ENCODE measurements at regions of chrX and their contacts with region 1.

Region 1: DNA sequence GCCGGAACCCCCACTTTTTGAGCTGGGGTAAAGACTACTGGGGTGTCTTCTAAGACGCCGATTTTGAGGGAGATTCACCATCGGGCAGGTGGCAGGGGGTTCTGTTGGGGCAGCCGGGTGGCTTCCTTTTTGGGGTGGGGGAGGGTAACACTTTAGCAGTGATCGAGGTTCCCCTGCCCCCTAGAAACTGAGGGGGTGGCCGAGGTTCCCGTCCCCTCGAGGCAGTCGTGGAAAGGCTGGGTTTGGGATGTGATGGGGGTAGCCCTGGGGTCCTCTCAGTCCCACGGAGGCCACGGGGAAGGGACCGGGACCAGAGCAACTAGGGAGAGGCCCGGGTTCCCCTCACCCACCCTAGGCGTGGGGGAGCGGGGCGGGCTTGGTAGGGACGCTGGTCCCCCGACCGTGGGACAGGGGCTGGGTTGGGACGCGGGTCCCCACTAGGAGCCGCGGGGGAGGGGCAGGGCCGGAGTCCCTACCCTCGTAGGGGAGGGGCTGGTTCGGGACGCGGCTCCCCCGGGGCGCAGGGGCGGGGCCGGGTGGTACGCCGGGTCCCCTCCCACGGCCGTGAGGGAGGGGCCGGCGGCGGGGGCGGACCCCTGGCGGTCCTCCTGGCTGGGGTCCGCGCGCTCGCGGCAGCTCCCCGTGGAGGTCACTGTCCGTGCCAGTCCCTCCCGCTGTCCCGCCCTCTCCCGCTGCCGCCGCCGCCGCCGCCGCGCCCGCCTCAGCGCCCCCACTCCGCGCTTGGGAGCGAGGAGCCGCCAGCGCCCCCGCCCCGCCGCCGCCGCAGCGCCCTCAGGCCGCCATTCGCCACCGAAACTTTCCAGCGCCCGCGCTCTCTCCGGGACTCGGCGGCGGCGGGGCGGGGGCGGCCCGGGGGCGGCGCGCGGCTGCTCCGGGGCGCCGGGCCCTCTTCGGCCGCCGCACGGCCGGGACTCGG is at the start of gene TBL1X:
- DNase-seq: peak; percentile 45 to 52 (median 49)
- H3K4me3 ChIP-seq: peak within 1 kb of the TSS in 1 of 2 donors; percentile 32
- H3K4me3 Mint-ChIP-seq: peak within 1 kb of the TSS; percentile 75 to 87 (median 82)
- H3K27ac ChIP-seq: peak within 1 kb of the TSS; percentile 56
- H3K27ac Mint-ChIP-seq: peak within 1 kb of the TSS; percentile 88 to 100 (median 93)
- H3K4me1 ChIP-seq: peaks cover 38% of the 10 kb centered on the region
- H3K4me1 Mint-ChIP-seq: peaks cover 21 to 54% (median 35%) of the 10 kb centered on the region in 4 donors
- H3K27me3 ChIP-seq: no peaks in the 10 kb centered on the region
- H3K27me3 Mint-ChIP-seq: peaks cover 0 to 4% of the 10 kb centered on the region in 2 donors
- total RNA-seq, gene TBL1X: 48.1 to 50.5 TPM

Region 2: GRCh38 chrX:8939344-8939743 is 525.4 kb before region 1 on chrX:
- CTCF ChIA-PET with region 1: no interaction called
- POLR2A ChIA-PET with region 1: no interaction called
- intact Hi-C with region 1: no loop called
- DNase-seq: no peak
- H3K4me3 ChIP-seq: no peak overlapping the region
- H3K4me3 Mint-ChIP-seq: no peak overlapping the region
- H3K27ac ChIP-seq: no peak overlapping the region
- H3K27ac Mint-ChIP-seq: no peak overlapping the region
- H3K4me1 ChIP-seq: no peaks in the 10 kb centered on the region
- H3K4me1 Mint-ChIP-seq: no peaks in the 10 kb centered on the region
- H3K27me3 ChIP-seq: no peaks in the 10 kb centered on the region
- H3K27me3 Mint-ChIP-seq: peaks cover 2 to 7% of the 10 kb centered on the region in 2 donors

Region 3: DNA sequence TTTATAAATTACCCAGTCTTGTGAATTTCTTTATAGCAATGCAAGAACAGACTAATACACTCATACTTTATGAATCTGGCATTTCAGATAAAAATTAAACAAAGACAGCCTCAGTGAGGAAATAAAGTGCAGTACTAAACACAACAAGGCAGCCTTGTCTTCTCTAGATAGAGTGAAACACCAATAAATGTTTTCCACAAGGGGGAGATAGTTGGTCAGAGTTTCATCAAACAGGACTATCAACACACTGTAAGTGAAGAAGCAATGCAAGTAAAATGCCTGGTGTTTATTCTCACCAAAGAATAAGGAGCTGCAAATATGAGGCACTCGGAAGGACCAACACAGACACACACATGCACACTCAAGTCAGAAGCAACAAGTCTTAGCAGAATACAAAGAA is 493.6 kb before region 1 on chrX:
- CTCF ChIA-PET with region 1: interaction called, 6 read pairs
- POLR2A ChIA-PET with region 1: interaction called, 7 read pairs
- intact Hi-C with region 1: loop called (anchors 5 kb)
- DNase-seq: peak in 4 of 5 donors; percentile 47 to 63 (median 50)
- H3K4me3 ChIP-seq: no peak overlapping the region
- H3K4me3 Mint-ChIP-seq: no peak overlapping the region
- H3K27ac ChIP-seq: no peak overlapping the region
- H3K27ac Mint-ChIP-seq: peak overlapping the region in 2 of 7 donors; percentile 0 to 10
- H3K4me1 ChIP-seq: no peaks in the 10 kb centered on the region
- H3K4me1 Mint-ChIP-seq: peaks cover 0 to 2% (median 0%) of the 10 kb centered on the region in 4 donors
- H3K27me3 ChIP-seq: no peaks in the 10 kb centered on the region
- H3K27me3 Mint-ChIP-seq: no peaks in the 10 kb centered on the region

Region 4: DNA sequence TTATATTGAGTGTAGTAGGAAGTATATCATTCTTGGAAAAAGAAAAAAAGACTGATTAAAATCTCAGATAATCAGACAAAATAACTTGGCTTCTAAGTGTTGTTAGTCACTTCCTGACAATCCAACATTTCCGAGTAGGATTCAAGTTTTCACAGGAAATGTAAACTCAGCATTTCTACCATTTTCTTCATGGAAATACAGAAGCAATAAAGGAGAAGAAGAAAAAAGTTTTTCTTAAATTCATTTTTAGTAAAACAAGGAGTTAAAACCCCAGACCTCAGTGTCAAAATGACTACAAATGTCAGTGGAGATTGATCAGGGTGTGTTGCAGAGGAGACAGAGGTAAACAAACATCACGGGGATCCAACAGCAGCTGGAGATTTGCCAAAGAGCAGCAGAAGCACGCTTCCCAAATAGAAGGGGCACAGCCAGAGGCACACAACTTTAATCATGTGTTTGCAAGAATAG is 301.5 kb before region 1 on chrX:
- CTCF ChIA-PET with region 1: no interaction called
- POLR2A ChIA-PET with region 1: interaction called, 3 read pairs
- intact Hi-C with region 1: loop called (anchors 1 kb)
- DNase-seq: no peak
- H3K4me3 ChIP-seq: no peak overlapping the region
- H3K4me3 Mint-ChIP-seq: peak overlapping the region in 1 of 8 donors; percentile 7
- H3K27ac ChIP-seq: no peak overlapping the region
- H3K27ac Mint-ChIP-seq: peak overlapping the region in 1 of 7 donors; percentile 53
- H3K4me1 ChIP-seq: peaks cover 24% of the 10 kb centered on the region
- H3K4me1 Mint-ChIP-seq: peaks cover 16 to 35% (median 24%) of the 10 kb centered on the region in 4 donors
- H3K27me3 ChIP-seq: no peaks in the 10 kb centered on the region
- H3K27me3 Mint-ChIP-seq: no peaks in the 10 kb centered on the region

Region 5: DNA sequence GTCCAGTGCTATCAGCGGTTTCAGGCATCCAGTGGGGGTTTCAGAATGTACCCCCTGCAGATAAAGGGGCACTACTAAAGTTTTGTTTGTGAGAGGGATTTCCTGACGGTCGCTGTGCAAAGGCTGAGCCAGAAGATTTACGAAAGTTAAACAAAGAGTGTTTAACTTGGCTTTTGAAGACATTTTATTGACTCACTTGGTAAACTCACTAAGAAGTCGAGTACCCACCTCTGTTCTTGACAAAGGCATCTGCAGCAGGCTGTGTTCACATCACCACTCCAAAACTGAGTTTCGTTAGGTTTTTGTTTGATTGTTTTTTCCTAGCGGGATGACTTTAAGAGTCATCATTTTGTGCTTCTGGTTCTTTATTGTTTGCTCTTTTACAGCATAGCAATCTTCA is 143.8 kb before region 1 on chrX:
- CTCF ChIA-PET with region 1: no interaction called
- POLR2A ChIA-PET with region 1: no interaction called
- intact Hi-C with region 1: no loop called
- DNase-seq: no peak
- H3K4me3 ChIP-seq: no peak overlapping the region
- H3K4me3 Mint-ChIP-seq: no peak overlapping the region
- H3K27ac ChIP-seq: no peak overlapping the region
- H3K27ac Mint-ChIP-seq: no peak overlapping the region
- H3K4me1 ChIP-seq: peaks cover 8% of the 10 kb centered on the region
- H3K4me1 Mint-ChIP-seq: peaks cover 6 to 18% (median 12%) of the 10 kb centered on the region in 4 donors
- H3K27me3 ChIP-seq: no peaks in the 10 kb centered on the region
- H3K27me3 Mint-ChIP-seq: no peaks in the 10 kb centered on the region

Region 6: GRCh38 chrX:9352694-9353411 is 111.8 kb before region 1 on chrX:
- CTCF ChIA-PET with region 1: interaction called, 6 read pairs
- POLR2A ChIA-PET with region 1: interaction called, 17 read pairs
- intact Hi-C with region 1: no loop called
- DNase-seq: peak in 3 of 5 donors; percentile 19 to 39 (median 24)
- H3K4me3 ChIP-seq: peak overlapping the region in 1 of 2 donors; percentile 35
- H3K4me3 Mint-ChIP-seq: peak overlapping the region; percentile 62 to 81 (median 77)
- H3K27ac ChIP-seq: peak overlapping the region; percentile 21
- H3K27ac Mint-ChIP-seq: peak overlapping the region; percentile 47 to 96 (median 92)
- H3K4me1 ChIP-seq: peaks cover 43% of the 10 kb centered on the region
- H3K4me1 Mint-ChIP-seq: peaks cover 20 to 40% (median 37%) of the 10 kb centered on the region in 4 donors
- H3K27me3 ChIP-seq: no peaks in the 10 kb centered on the region
- H3K27me3 Mint-ChIP-seq: no peaks in the 10 kb centered on the region

Region 7: GRCh38 chrX:9708904-9709553 is 244.3 kb after region 1 on chrX:
- CTCF ChIA-PET with region 1: no interaction called
- POLR2A ChIA-PET with region 1: no interaction called
- intact Hi-C with region 1: loop called (anchors 1 kb)
- DNase-seq: peak; percentile 71 to 80 (median 79)
- H3K4me3 ChIP-seq: no peak overlapping the region
- H3K4me3 Mint-ChIP-seq: peak overlapping the region in 3 of 8 donors; percentile 7 to 57 (median 35)
- H3K27ac ChIP-seq: no peak overlapping the region
- H3K27ac Mint-ChIP-seq: peak overlapping the region in 4 of 7 donors; percentile 14 to 92 (median 42)
- H3K4me1 ChIP-seq: peaks cover 6% of the 10 kb centered on the region
- H3K4me1 Mint-ChIP-seq: peaks cover 5 to 13% (median 11%) of the 10 kb centered on the region in 4 donors
- H3K27me3 ChIP-seq: no peaks in the 10 kb centered on the region
- H3K27me3 Mint-ChIP-seq: no peaks in the 10 kb centered on the region